ENCODE measurements at regions of chr2 and their contacts with region 1.

Region 1: GRCh38 chr2:66495788-66496640 is 61.1 kb downstream of the MEIS1 start:
- DNase-seq: peak; percentile 89 to 92
- H3K4me3 ChIP-seq: peak overlapping the region; percentile 32; the same call in 1 of the 2 replicates
- H3K27ac ChIP-seq: peak overlapping the region; percentile 91
- H3K4me1 ChIP-seq: peaks cover 46% of the 10 kb centered on the region
- H3K27me3 ChIP-seq: no peaks in the 10 kb centered on the region
- CTCF ChIP-seq: peak; percentile 55; the same call in 1 of the 2 replicates

Region 2: GRCh38 chr2:66408905-66409304 is 87.1 kb before region 1 on chr2:
- CTCF ChIA-PET with region 1: no interaction called
- POLR2A ChIA-PET with region 1: no interaction called
- intact Hi-C with region 1: no loop called
- DNase-seq: no peak
- H3K4me3 ChIP-seq: no peak overlapping the region
- H3K27ac ChIP-seq: no peak overlapping the region
- H3K4me1 ChIP-seq: no peaks in the 10 kb centered on the region
- H3K27me3 ChIP-seq: no peaks in the 10 kb centered on the region
- CTCF ChIP-seq: no peak

Region 3: GRCh38 chr2:66481100-66481549 is 14.9 kb before region 1 on chr2:
- CTCF ChIA-PET with region 1: no interaction called
- POLR2A ChIA-PET with region 1: interaction called, 4 read pairs
- intact Hi-C with region 1: loop called (anchors 2 kb)
- DNase-seq: peak; percentile 57 to 74
- H3K4me3 ChIP-seq: no peak overlapping the region
- H3K27ac ChIP-seq: peak overlapping the region; percentile 62
- H3K4me1 ChIP-seq: peaks cover 12% of the 10 kb centered on the region
- H3K27me3 ChIP-seq: no peaks in the 10 kb centered on the region
- CTCF ChIP-seq: no peak

Region 4: GRCh38 chr2:66509326-66509811 is 13.4 kb after region 1 on chr2:
- CTCF ChIA-PET with region 1: interaction called, 4 read pairs
- POLR2A ChIA-PET with region 1: no interaction called
- intact Hi-C with region 1: loop called (anchors 2 kb)
- DNase-seq: peak; percentile 48 to 89
- H3K4me3 ChIP-seq: no peak overlapping the region
- H3K27ac ChIP-seq: peak overlapping the region; percentile 68
- H3K4me1 ChIP-seq: peaks cover 23% of the 10 kb centered on the region
- H3K27me3 ChIP-seq: no peaks in the 10 kb centered on the region
- CTCF ChIP-seq: no peak

Region 5: GRCh38 chr2:67836866-67837265 is 1340.9 kb after region 1 on chr2:
- CTCF ChIA-PET with region 1: no interaction called
- POLR2A ChIA-PET with region 1: no interaction called
- intact Hi-C with region 1: no loop called
- DNase-seq: no peak
- H3K4me3 ChIP-seq: no peak overlapping the region
- H3K27ac ChIP-seq: no peak overlapping the region
- H3K4me1 ChIP-seq: no peaks in the 10 kb centered on the region
- H3K27me3 ChIP-seq: no peaks in the 10 kb centered on the region
- CTCF ChIP-seq: no peak